A673 (cell line): ENCODE measurements at regions of chr20 and their contacts with region 1.

Region 1: GRCh38 chr20:40890181-40890580 is 138.4 kb upstream of the TOP1 start:
- DNase-seq: no peak
- H3K4me3 ChIP-seq: no peak overlapping the region
- H3K27ac ChIP-seq: no peak overlapping the region
- H3K4me1 ChIP-seq: no peaks in the 10 kb centered on the region
- H3K27me3 ChIP-seq: peaks cover 14% of the 10 kb centered on the region
- CTCF ChIP-seq: no peak

Region 2: GRCh38 chr20:40218316-40218969 is 671.7 kb before region 1 on chr20:
- CTCF ChIA-PET with region 1: interaction called, 13 read pairs
- POLR2A ChIA-PET with region 1: no interaction called
- intact Hi-C with region 1: no loop called
- DNase-seq: no peak
- H3K4me3 ChIP-seq: no peak overlapping the region
- H3K27ac ChIP-seq: no peak overlapping the region
- H3K4me1 ChIP-seq: no peaks in the 10 kb centered on the region
- H3K27me3 ChIP-seq: no peaks in the 10 kb centered on the region
- CTCF ChIP-seq: no peak

Region 3: GRCh38 chr20:41057999-41058896 is 168.1 kb after region 1 on chr20:
- CTCF ChIA-PET with region 1: no interaction called
- POLR2A ChIA-PET with region 1: no interaction called
- intact Hi-C with region 1: no loop called
- DNase-seq: peak; percentile 97
- H3K4me3 ChIP-seq: no peak overlapping the region
- H3K27ac ChIP-seq: peak overlapping the region; percentile 28
- H3K4me1 ChIP-seq: peaks cover 53% of the 10 kb centered on the region
- H3K27me3 ChIP-seq: no peaks in the 10 kb centered on the region
- CTCF ChIP-seq: no peak